CD8-positive, alpha-beta T cell (primary cell): ENCODE measurements at regions of chr1 and their contacts with region 1.

Region 1: GRCh38 chr1:241519308-241520079 is at the start of gene FH:
- DNase-seq: peak; percentile 83 to 98 (median 92)
- ATAC-seq: peak; percentile 98
- H3K4me3 ChIP-seq: peak within 1 kb of the TSS; percentile 56 to 75
- H3K4me3 Mint-ChIP-seq: peak within 1 kb of the TSS; percentile 94
- H3K27ac ChIP-seq: peak within 1 kb of the TSS; percentile 50 to 64
- H3K27ac Mint-ChIP-seq: peak within 1 kb of the TSS; percentile 90
- H3K4me1 ChIP-seq: peaks cover 11% of the 10 kb centered on the region
- H3K4me1 Mint-ChIP-seq: peaks cover 30% of the 10 kb centered on the region
- H3K27me3 ChIP-seq: peaks cover 5 to 6% of the 10 kb centered on the region in 2 experiments
- H3K27me3 Mint-ChIP-seq: peaks cover 22% of the 10 kb centered on the region
- CTCF ChIP-seq: no peak
- total RNA-seq, gene FH: 12.1 to 14.0 TPM

Region 2: GRCh38 chr1:241495741-241496140 is 23.8 kb before region 1 on chr1:
- CTCF ChIA-PET with region 1: no interaction called
- POLR2A ChIA-PET with region 1: no interaction called
- intact Hi-C with region 1: no loop called
- DNase-seq: no peak
- ATAC-seq: no peak
- H3K4me3 ChIP-seq: no peak overlapping the region
- H3K4me3 Mint-ChIP-seq: no peak overlapping the region
- H3K27ac ChIP-seq: no peak overlapping the region
- H3K27ac Mint-ChIP-seq: no peak overlapping the region
- H3K4me1 ChIP-seq: no peaks in the 10 kb centered on the region
- H3K4me1 Mint-ChIP-seq: no peaks in the 10 kb centered on the region
- H3K27me3 ChIP-seq: no peaks in the 10 kb centered on the region
- H3K27me3 Mint-ChIP-seq: no peaks in the 10 kb centered on the region
- CTCF ChIP-seq: no peak

Region 3: DNA sequence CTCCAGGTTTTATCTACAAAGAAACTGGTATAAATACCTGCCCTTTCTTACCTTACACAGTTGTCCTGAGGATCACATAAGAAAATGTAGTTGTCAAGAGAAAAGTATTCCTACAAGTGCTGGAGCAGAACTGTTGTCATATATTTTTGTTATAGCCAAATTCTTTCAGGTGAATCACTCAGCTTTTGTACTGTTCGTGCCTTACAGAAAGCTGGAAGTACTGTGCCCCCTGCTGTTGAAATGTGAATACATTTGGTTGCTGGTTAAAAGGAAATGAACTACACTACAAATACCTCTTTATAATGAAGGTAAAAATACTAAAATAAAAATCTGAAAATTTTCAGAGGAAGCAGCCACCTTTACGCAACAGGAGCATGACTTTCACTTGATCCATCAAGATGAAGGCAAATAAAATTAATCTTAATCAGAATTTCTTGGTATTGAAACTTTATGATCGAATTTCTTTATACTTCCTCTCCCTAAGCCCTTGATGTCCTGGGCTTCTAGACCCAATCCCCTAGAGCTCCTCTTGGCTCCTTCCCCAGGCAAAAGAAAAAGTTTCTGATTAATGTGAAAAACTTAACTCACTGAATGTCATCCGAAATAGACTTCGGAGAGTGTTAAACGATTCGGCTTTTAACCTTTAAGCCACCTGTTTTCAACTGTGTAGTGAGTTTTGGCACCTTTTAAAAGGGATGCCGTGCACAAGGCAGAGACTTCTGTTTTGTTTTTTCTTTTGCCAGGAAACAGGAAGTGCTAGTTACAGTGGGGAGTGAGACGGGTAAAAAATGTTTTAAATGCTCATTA is 108.2 kb after region 1 on chr1:
- CTCF ChIA-PET with region 1: no interaction called
- POLR2A ChIA-PET with region 1: interaction called, 3 read pairs
- intact Hi-C with region 1: loop called in 1 of 2 experiments (anchors 5 kb)
- DNase-seq: peak in 6 of 9 experiments; percentile 13 to 81 (median 43)
- ATAC-seq: peak; percentile 77
- H3K4me3 ChIP-seq: peak overlapping the region; percentile 25 to 29
- H3K4me3 Mint-ChIP-seq: peak overlapping the region; percentile 77
- H3K27ac ChIP-seq: peak overlapping the region; percentile 38 to 45
- H3K27ac Mint-ChIP-seq: peak overlapping the region; percentile 92
- H3K4me1 ChIP-seq: peaks cover 4% of the 10 kb centered on the region
- H3K4me1 Mint-ChIP-seq: peaks cover 24% of the 10 kb centered on the region
- H3K27me3 ChIP-seq: no peaks in the 10 kb centered on the region
- H3K27me3 Mint-ChIP-seq: no peaks in the 10 kb centered on the region
- CTCF ChIP-seq: peak; percentile 79

Region 4: GRCh38 chr1:241799416-241799815 is 279.9 kb after region 1 on chr1:
- CTCF ChIA-PET with region 1: no interaction called
- POLR2A ChIA-PET with region 1: no interaction called
- intact Hi-C with region 1: no loop called
- DNase-seq: no peak
- ATAC-seq: no peak
- H3K4me3 ChIP-seq: no peak overlapping the region
- H3K4me3 Mint-ChIP-seq: no peak overlapping the region
- H3K27ac ChIP-seq: no peak overlapping the region
- H3K27ac Mint-ChIP-seq: no peak overlapping the region
- H3K4me1 ChIP-seq: no peaks in the 10 kb centered on the region
- H3K4me1 Mint-ChIP-seq: no peaks in the 10 kb centered on the region
- H3K27me3 ChIP-seq: no peaks in the 10 kb centered on the region
- H3K27me3 Mint-ChIP-seq: no peaks in the 10 kb centered on the region
- CTCF ChIP-seq: no peak

Region 5: DNA sequence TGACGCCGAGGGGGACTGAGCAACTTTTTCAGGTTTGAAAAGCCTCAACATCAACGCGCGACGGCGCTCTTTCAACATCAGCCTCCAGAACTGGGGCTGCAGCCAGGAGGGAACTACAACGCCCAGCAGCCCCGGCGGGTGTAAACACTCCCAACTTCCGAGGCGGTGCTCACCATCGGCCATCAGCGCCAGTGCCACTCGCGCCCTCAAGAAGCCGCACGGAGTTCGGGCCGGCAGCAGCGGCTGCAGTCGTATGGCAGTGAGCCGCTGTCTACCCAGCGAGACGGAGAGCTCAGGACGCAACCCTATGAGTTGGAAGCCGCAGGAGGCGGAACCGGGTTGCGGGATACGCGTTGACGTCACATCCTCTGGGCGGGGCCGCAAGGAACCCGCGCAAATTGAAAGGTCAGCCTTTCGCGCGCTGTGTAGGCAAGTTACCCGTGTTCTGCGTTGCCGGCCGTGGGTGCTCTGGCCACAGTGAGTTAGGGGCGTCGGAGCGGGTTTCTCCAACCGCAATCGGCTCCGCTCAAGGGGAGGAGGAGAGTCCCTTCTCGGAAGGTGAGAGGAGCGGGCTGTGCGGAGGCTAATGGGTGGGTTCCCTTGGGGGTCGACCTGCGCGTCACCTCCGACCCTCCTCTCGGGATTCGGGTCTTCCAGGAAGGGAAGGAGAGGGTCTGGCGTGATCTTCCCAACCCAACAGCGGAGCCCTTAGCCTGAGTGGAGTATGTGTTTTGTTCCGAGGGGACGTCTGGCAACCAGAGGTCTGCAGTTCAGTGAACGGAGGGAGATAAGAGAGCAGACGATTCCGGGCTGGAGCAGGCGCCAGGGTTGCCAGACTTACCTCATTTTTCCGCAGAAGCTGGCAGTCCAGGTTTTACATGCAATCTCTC is 328.5 kb after region 1 on chr1 and contains the start of gene EXO1:
- CTCF ChIA-PET with region 1: no interaction called
- POLR2A ChIA-PET with region 1: interaction called, 4 read pairs
- intact Hi-C with region 1: loop called (anchors 1 kb)
- DNase-seq: peak; percentile 78 to 95 (median 88)
- ATAC-seq: peak; percentile 97
- H3K4me3 ChIP-seq: peak within 1 kb of the TSS; percentile 94 to 100
- H3K4me3 Mint-ChIP-seq: peak within 1 kb of the TSS; percentile 100
- H3K27ac ChIP-seq: peak within 1 kb of the TSS; percentile 94 to 98
- H3K27ac Mint-ChIP-seq: peak within 1 kb of the TSS; percentile 99
- H3K4me1 ChIP-seq: peaks cover 9% of the 10 kb centered on the region
- H3K4me1 Mint-ChIP-seq: peaks cover 18% of the 10 kb centered on the region
- H3K27me3 ChIP-seq: no peaks in the 10 kb centered on the region
- H3K27me3 Mint-ChIP-seq: no peaks in the 10 kb centered on the region
- CTCF ChIP-seq: peak; percentile 29
- total RNA-seq, gene EXO1: 1.5 to 2.4 TPM